ENCODE measurements at regions of chr10 and their contacts with region 1.

Region 1: DNA sequence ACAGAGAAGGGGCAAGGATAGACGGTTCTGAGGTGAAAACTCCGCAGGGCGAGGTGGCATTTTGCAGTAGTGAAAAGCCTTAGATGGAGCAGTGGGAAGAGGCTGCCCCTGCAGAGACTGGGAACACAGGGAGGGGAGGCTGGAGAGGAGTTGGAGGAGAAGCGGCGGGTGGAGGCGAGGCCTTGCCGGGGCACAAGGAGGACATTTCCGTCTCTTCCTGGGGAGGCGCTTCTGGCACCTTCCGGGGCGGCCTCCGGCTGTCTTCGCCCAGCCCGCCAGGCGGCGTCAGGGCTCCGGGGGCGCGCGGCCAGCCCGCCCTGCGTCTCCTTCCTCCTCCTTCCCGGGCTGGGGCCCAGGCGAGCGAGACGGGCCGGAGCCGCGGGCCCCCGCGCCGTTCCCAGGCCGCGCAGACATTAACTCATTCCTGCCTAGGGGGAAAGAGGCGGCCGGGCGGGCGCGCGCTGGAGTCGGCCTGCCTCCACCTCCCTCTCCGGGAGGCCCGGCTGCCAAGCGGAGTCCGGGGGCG is 42.7 kb downstream of the LDB3 start:
- DNase-seq: peak; percentile 96

Region 2: DNA sequence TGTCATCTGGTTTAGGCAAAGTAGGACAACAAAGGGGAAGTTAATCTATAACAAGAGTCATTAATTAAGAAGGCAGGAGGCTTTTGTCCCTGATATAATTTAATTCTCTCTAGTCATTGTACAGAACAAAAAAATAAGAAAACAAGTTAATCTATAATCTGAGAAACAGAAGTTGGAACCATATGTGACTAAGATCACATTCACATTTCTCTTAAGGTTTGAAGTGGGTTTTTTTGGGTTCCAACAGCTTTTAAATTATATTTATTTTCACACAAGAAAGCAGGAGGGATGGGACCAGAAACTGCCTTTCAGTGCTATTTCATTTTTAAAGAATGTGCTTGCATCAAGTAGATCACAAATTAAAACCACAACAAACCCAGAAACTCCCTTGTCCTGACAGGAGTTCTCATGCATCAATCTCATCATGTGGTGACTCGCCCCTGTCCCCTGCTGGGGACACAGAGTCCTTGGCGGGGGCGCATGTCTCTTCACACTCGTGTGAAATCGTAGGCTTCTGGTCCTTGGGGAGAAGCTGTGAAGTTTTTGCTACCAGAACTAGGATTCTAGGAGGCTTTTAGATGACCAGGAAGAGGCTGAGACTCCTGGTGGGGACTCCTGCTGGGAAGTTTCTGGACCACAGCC is 66.8 kb before region 1 on chr10:
- intact Hi-C with region 1: no loop called
- DNase-seq: peak; percentile 73

Region 3: DNA sequence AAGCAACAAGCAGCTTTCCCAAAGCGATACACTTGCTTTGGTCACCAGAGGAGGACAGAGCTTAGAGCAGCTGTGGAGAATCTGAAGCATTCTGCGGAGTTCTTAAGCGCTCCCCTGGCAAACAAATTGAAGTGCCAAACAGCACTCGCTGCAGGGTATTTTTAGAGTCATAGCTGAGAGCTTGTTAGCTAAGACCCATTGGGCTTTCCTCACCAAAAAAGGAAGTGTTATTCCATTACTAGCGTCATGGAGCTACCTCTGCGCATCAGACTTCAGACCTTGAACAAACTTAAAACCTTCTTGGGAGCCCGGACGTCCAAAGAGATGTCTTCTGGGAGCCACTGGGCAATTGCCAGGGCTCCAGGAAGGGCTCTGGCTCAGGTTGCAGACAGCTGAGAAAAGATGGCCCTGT is 22.2 kb after region 1 on chr10:
- intact Hi-C with region 1: no loop called
- DNase-seq: no peak

Region 4: DNA sequence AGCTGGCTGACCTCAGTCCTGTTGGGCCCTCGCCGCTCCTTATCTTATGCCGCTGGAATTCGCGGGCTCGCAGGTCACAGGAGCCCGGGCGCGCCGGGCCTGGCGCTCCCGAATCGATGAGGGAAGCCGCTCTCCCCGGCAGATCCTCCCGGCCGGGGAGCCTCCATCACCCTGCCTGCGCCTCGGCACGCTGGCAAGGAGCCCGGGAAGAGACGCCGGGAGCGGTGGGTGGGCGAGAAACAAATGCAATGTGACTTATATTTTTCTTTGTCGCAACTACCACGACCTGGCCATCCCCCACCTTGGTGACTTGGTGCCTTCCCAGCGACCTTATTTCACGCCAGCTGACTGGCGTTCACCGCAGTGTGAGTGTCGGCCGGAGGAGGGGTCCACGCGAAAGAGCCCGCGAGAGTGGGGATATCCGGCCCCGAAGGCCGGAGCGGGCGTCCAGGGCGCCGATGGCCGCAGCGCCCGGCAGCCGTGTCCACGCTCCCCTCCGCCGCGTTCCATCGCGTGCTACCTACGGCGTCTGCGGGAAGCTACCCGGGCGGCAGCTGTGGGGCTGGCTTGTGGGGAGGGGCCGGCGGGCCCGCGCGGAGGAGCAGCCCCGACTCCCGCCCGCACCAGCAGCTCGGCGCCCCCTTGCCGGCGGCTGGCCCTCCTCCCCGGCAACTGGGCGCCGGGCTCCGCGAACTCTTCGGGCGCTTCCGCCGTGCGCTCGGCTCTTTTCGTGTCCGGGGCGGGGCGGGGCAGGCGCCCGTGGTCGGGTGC is 44.9 kb after region 1 on chr10:
- intact Hi-C with region 1: loop called in 1 of 2 experiments (anchors 5 kb)
- DNase-seq: peak; percentile 93

Region 5: GRCh38 chr10:86795353-86795752 is 84.3 kb after region 1 on chr10:
- intact Hi-C with region 1: no loop called
- DNase-seq: no peak

Region 6: GRCh38 chr10:86888585-86889381 is 177.7 kb after region 1 on chr10:
- intact Hi-C with region 1: loop called in 1 of 2 experiments (anchors 5 kb)
- DNase-seq: no peak

Region 7: GRCh38 chr10:86899670-86900276 is 188.7 kb after region 1 on chr10:
- intact Hi-C with region 1: loop called in 1 of 2 experiments (anchors 5 kb)
- DNase-seq: no peak